Posterior vena cava (tissue), 2 donors: ENCODE measurements at regions of chr12 and their contacts with region 1.

Region 1: GRCh38 chr12:98294051-98294805 is 221.2 kb upstream of the TMPO start:
- DNase-seq: no peak

Region 2: DNA sequence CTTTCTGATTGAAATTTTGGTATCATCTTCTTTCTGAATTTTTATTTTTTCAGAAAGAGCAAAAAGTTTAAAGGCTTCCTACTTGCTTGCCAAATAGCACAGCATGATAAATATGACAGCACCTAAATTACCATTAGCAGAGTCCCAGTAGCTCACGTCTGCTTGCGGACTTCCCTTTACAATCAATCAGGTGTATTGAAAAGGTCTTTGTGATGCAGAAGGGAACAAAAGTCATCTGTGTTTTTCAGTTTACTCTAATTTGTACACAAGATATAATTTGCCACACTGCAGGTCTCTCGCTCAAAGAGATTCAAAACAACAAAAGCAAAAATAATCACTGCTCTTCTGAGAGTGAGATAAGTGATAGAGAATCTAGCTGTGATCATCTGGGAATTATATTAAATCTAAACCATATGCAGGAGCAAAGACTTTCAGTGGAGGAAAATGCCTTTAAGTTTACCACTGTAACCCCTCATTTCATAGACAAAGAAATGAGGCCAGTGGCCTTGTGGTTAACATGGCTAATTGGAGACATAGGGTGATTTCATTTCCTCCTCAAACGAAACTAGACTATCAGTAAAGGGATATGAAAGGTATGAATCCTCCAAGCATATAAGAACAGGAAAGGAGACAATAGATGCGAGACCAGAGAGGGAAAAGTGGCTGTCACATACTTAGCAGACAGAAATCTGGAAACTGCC is 19.6 kb before region 1 on chr12:
- intact Hi-C with region 1: loop called in 1 of 2 experiments (anchors 1 kb)
- DNase-seq: no peak

Region 3: DNA sequence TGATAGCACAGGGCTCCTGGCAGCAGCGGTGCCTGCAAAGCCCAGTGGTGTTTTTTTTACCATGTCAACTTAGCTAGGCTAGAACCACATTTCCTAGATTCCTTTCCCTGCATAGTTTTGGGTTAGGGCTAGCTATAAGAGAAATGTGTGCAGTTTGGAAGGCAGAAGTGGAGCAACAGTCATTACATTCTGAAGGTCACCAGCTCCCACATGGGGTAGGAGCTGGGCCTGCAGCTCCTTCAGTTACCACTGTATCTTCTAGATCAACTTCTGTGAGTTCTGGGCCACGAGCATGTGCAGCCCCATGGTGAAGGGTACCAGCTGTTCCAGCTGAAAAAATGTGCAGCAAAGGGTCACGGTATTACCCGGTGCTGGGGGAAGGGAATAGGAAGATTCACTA is 297.0 kb after region 1 on chr12:
- intact Hi-C with region 1: no loop called
- DNase-seq: peak; percentile 81